KBM-7 (cell line): ENCODE measurements at regions of chr21 and their contacts with region 1.

Region 1: DNA sequence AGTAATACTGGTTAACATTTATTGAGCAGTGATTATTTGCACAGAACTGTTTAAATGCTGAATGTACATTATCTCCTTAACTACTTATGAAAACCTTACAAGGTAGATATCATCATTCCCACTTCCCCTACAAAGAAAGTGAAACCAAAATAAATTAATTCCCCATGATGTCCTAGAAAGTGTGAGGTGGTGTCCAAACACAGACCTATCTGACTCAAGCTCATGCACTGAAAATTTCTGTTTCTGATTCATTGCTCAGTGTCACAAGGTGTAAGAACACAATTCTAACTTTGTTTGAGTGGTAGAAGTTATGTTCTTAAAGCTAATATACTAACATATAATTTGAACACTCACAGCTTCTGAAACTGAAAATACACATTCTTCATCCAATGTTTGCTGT is 178.7 kb downstream of the MRPL39 start:
- DNase-seq: no peak

Region 2: DNA sequence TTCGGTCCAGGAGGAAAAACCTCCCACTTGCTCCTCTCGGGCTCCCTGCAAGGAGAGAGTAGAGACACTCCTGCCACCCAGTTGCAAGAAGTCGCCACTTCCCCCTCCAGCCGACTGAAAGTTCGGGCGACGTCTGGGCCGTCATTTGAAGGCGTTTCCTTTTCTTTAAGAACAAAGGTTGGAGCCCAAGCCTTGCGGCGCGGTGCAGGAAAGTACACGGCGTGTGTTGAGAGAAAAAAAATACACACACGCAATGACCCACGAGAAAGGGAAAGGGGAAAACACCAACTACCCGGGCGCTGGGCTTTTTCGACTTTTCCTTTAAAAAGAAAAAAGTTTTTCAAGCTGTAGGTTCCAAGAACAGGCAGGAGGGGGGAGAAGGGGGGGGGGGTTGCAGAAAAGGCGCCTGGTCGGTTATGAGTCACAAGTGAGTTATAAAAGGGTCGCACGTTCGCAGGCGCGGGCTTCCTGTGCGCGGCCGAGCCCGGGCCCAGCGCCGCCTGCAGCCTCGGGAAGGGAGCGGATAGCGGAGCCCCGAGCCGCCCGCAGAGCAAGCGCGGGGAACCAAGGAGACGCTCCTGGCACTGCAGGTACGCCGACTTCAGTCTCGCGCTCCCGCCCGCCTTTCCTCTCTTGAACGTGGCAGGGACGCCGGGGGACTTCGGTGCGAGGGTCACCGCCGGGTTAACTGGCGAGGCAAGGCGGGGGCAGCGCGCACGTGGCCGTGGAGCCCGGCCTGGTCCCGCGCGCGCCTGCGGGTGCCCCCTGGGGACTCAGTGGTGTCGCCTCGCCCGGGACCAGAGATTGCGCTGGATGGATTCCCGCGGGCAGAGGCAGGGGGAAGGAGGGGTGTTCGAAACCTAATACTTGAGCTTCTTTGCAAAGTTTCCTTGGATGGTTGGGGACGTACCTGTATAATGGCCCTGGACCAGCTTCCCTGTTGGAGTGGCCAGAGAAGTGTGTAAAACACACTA is 133.4 kb after region 1 on chr21:
- in situ Hi-C with region 1: loop called (anchors 25 kb)
- DNase-seq: peak; percentile 87

Region 3: DNA sequence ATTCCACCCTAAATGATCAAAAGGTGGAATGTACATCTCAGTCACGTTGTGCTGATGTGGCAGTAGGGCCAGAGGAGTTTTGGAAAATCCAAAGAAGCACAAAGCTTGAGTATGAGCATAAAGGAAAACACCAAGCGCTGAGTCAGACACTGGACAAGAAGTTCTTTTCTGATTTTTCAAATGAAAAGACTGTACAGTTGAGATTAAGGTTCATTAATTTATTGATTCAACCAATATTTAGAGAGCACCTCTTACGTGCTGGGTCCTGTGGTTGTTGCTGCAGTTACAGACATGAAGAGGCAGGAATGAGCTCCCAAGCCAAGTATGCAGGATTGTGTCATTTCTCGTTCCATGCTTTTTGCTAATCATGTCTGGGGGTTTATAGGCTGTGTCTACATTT is 770.9 kb after region 1 on chr21:
- in situ Hi-C with region 1: no loop called
- DNase-seq: no peak

Region 4: DNA sequence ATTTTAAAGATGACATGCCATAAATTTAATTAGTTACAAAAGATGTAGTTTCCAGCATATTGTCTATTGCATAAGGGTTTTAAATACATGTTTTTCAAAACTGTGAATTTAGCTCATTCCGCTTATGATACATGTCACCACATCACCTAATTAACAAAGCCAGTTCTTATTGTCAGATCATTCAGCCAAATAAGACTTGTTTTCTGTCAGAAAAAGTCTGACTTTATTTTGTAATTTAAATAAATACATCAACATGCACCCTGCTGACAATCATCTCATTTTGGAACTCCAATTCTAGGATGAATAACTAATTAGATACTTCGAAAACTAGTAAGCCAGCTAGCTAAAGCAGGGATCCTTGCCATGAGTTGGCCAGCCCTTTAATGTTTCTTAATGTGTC is 853.0 kb after region 1 on chr21:
- in situ Hi-C with region 1: no loop called
- DNase-seq: no peak